Common myeloid progenitor, CD34-positive (primary cell): ENCODE measurements at regions of chr6 and their contacts with region 1.

Region 1: DNA sequence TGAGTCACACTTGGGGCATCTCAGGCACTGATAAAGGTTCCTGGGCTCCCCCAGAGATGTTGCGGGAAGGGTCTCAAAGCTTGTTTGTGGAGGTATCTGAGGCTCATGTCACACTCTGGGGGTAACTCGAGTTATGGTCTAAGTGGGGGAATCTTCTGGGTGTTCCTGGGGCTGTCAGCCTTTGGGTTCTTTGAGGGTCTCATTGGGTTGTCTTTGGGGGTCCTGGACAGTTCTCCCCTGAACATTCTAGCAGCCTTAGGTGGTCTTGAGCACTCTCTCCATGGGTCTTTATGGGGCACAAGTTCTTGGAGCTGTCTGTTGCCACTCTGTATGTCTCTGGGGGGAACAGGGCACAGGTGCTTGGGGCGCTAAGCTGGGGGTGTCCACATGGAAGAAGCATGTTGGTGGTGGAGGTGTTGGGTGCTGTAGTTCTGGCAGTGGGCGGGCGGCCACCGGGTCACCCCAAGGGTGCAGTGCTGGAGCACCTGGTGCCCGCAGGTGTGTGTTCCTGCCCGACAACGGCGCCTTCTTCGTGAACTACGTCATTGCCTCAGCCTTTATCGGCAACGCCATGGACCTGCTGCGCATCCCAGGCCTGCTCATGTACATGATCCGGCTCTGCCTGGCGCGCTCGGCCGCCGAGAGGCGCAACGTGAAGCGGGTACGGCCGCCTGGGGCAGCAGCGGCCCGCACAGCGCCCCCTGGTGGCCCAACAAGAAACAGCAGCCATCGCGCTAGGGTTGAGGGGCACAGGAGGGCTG is 7.1 kb upstream of the CAPN11 start:
- DNase-seq: peak; percentile 75 to 86 (median 81)
- H3K4me3 ChIP-seq: no peak overlapping the region
- H3K27ac ChIP-seq: no peak overlapping the region
- H3K4me1 ChIP-seq: peaks cover 0 to 6% (median 2%) of the 10 kb centered on the region in 4 experiments
- H3K27me3 ChIP-seq: peaks cover 0 to 4% (median 0%) of the 10 kb centered on the region in 5 experiments

Region 2: GRCh38 chr6:44102527-44102926 is 49.0 kb before region 1 on chr6:
- CTCF ChIA-PET with region 1: interaction called, 51 read pairs
- POLR2A ChIA-PET with region 1: interaction called, 3 read pairs
- DNase-seq: no peak
- H3K4me3 ChIP-seq: no peak overlapping the region
- H3K27ac ChIP-seq: no peak overlapping the region
- H3K4me1 ChIP-seq: peaks cover 0 to 10% (median 0%) of the 10 kb centered on the region in 4 experiments
- H3K27me3 ChIP-seq: no peaks in the 10 kb centered on the region

Region 3: DNA sequence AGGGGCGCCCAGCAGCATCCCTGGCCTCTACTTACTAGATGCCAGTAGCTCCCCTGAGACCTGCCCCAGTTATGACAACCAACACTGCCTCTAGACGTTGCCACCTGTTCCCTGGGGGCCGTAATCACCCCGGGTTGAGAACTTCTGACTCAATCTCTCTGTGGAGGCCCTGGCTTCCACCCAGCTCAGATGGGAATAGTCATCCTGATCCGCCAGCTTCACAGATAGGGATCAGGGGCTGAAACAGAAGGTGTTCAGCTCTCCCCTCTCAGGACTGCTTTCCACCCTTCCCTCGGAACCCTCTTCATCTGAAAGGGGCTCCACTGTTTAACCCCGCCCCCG is 10.4 kb after region 1 on chr6:
- CTCF ChIA-PET with region 1: interaction called, 17 read pairs
- POLR2A ChIA-PET with region 1: no interaction called
- DNase-seq: no peak
- H3K4me3 ChIP-seq: no peak overlapping the region
- H3K27ac ChIP-seq: no peak overlapping the region
- H3K4me1 ChIP-seq: peaks cover 0 to 17% (median 11%) of the 10 kb centered on the region in 4 experiments
- H3K27me3 ChIP-seq: no peaks in the 10 kb centered on the region